Panc1 (cell line): ENCODE measurements at regions of chr11 and their contacts with region 1.

Region 1: DNA sequence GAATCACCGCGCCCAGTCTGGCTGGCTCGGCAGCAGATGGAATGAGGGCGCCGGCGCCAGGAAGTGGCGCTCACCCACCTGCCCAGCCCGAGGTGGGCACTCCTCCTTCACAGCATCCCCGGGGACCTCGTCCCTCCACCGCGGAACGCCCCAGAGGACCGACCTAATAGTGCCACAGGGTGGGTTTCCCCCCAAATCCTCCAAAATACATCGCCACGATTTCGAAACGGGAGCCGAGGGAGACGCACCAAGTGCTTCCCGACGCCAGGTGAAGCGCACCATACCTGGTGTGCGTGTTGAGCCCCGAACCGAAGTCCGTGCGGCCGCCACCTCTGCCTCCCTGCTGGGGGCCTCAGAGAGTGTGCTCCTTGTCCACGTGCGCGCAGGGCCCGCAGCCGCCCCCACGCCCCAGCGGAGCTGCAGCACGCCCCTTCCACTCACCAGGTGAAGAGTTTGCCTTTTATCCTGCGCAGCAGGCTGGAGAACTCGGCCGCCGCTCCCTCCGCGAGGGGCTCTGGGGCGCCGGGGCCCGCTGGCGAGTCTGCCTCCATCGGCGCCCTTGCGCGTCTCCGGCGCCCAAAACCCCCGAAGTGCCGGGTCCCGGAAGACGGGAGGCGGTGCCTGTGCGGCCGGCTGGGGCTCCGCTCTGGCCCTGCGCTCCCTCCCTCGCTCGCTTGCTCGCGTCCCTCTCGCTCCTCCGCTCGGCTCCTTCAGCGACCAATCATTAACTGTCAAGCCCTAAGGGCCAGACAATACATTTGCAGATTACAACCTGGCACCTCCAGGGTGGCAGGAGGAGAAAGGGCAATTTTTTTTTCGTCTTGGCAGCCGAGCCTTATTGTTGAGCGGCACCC is at the start of gene SLC35F2:
- DNase-seq: peak; percentile 54
- ATAC-seq: peak; percentile 92
- H3K4me3 ChIP-seq: peak within 1 kb of the TSS; percentile 83 to 91
- H3K27ac ChIP-seq: peak within 1 kb of the TSS; percentile 96
- H3K4me1 ChIP-seq: peaks cover 12% of the 10 kb centered on the region; the same call in 1 of the 2 replicates
- H3K27me3 ChIP-seq: no peaks in the 10 kb centered on the region
- CTCF ChIP-seq: no peak; the same call in 1 of the 2 replicates
- total RNA-seq, gene SLC35F2: 89.4 TPM

Region 2: DNA sequence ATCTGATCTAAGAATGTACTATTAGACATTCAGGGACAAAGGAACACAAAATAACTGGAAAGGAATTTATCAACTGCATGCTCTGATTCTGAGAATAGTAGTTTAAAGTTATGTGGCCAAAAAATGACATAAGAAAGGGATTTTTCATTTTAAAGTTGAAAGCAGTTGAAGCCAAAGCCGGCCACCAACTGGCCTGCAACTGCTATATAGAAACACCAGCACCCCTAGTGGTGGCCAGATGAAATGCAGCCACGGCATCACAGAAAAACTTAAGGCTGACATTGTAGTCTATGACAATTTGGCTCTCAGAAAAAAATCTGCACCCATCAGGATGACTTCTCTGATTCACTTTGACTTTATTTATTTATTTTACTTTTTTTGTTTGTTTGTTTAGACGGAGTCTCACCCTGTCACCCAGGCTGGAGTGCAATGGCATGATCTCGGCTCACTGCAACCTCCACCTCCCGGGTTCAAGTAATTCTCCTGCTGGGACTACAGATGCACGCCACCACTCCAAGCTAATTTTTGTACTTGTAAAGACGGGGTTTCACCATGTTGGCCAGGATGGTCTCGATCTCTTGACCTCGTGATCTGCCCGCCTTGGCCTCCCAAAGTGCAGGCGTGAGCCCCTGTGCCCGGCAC is 59.1 kb before region 1 on chr11:
- CTCF ChIA-PET with region 1: no interaction called
- POLR2A ChIA-PET with region 1: no interaction called
- in situ Hi-C with region 1: no loop called
- intact Hi-C with region 1: loop called (anchors 5 kb)
- DNase-seq: peak; percentile 68
- ATAC-seq: peak; percentile 92
- H3K4me3 ChIP-seq: no peak overlapping the region
- H3K27ac ChIP-seq: no peak overlapping the region
- H3K4me1 ChIP-seq: peaks cover 4% of the 10 kb centered on the region; the same call in 1 of the 2 replicates
- H3K27me3 ChIP-seq: no peaks in the 10 kb centered on the region
- CTCF ChIP-seq: peak; percentile 99

Region 3: GRCh38 chr11:107830915-107831540 is 27.4 kb before region 1 on chr11:
- CTCF ChIA-PET with region 1: no interaction called
- POLR2A ChIA-PET with region 1: no interaction called
- in situ Hi-C with region 1: no loop called
- intact Hi-C with region 1: no loop called
- DNase-seq: no peak
- ATAC-seq: peak; percentile 59; the same call in 1 of the 2 replicates
- H3K4me3 ChIP-seq: no peak overlapping the region
- H3K27ac ChIP-seq: peak overlapping the region; percentile 75
- H3K4me1 ChIP-seq: peaks cover 55% of the 10 kb centered on the region
- H3K27me3 ChIP-seq: no peaks in the 10 kb centered on the region
- CTCF ChIP-seq: no peak

Region 4: DNA sequence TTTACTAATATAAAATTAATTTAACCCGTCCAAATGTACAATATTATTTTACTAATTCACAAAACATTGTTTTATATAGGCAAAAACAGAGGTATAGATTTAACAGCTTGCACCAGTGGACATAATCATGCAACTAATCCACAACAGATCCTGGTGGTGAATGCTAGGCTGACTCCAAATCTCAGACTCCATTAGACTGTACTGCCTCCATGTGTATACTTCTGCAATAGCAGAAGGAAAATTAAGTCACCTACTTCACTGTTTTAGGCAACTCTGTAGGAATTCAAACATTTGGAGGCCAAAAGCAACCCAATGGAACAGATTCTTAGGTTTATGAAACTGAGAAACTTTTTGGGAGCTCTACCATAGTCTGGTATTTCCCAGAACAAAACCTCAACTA is 39.8 kb after region 1 on chr11:
- CTCF ChIA-PET with region 1: no interaction called
- POLR2A ChIA-PET with region 1: no interaction called
- in situ Hi-C with region 1: no loop called
- intact Hi-C with region 1: loop called (anchors 2 kb)
- DNase-seq: peak; percentile 59
- ATAC-seq: peak; percentile 93
- H3K4me3 ChIP-seq: no peak overlapping the region
- H3K27ac ChIP-seq: no peak overlapping the region
- H3K4me1 ChIP-seq: no peaks in the 10 kb centered on the region
- H3K27me3 ChIP-seq: no peaks in the 10 kb centered on the region
- CTCF ChIP-seq: peak; percentile 83; the same call in 1 of the 2 replicates